ENCODE measurements at regions of chr5 and their contacts with region 1.

Region 1: GRCh38 chr5:163094492-163095180 is 342.8 kb upstream of the CCNG1 start:
- DNase-seq: no peak
- H3K4me3 Mint-ChIP-seq: peak overlapping the region; percentile 15
- H3K27ac Mint-ChIP-seq: no peak overlapping the region
- H3K4me1 Mint-ChIP-seq: no peaks in the 10 kb centered on the region
- H3K27me3 Mint-ChIP-seq: peaks cover 33% of the 10 kb centered on the region
- CTCF ChIP-seq: no peak

Region 2: DNA sequence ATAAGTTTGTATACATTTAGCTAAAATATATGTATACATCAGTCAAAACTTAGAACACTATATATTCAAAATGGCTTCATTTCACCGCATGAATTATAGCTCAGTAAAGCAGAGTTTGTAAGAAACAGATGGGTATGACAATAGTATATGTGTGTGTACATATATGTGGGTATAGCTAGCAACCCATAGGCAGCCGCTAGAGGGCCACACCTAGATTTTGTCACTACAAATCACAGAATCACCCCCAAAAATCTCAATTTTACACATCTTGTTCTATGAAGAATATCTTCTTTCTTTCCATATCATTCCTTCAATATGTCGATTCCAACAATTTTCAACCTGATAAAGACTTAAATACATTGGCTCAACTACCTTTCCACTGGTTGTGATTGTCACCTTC is 15.0 kb before region 1 on chr5:
- CTCF ChIA-PET with region 1: interaction called, 10 read pairs
- POLR2A ChIA-PET with region 1: no interaction called
- intact Hi-C with region 1: no loop called
- DNase-seq: peak; percentile 31
- H3K4me3 Mint-ChIP-seq: no peak overlapping the region
- H3K27ac Mint-ChIP-seq: no peak overlapping the region
- H3K4me1 Mint-ChIP-seq: no peaks in the 10 kb centered on the region
- H3K27me3 Mint-ChIP-seq: no peaks in the 10 kb centered on the region
- CTCF ChIP-seq: peak; percentile 64

Measured in MCF 10A (cell line).